A673 (cell line): ENCODE measurements at regions of chr16 and their contacts with region 1.

Region 1: GRCh38 chr16:21645261-21645721 is 7.1 kb downstream of the IGSF6 start:
- DNase-seq: no peak
- H3K4me3 ChIP-seq: no peak overlapping the region
- H3K27ac ChIP-seq: peak overlapping the region; percentile 35
- H3K4me1 ChIP-seq: peaks cover 9% of the 10 kb centered on the region
- H3K27me3 ChIP-seq: no peaks in the 10 kb centered on the region
- CTCF ChIP-seq: no peak

Region 2: GRCh38 chr16:21584817-21585216 is 60.5 kb before region 1 on chr16:
- CTCF ChIA-PET with region 1: interaction called, 4 read pairs
- POLR2A ChIA-PET with region 1: no interaction called
- intact Hi-C with region 1: loop called (anchors 1 kb)
- DNase-seq: no peak
- H3K4me3 ChIP-seq: no peak overlapping the region
- H3K27ac ChIP-seq: no peak overlapping the region
- H3K4me1 ChIP-seq: no peaks in the 10 kb centered on the region
- H3K27me3 ChIP-seq: no peaks in the 10 kb centered on the region
- CTCF ChIP-seq: no peak

Region 3: DNA sequence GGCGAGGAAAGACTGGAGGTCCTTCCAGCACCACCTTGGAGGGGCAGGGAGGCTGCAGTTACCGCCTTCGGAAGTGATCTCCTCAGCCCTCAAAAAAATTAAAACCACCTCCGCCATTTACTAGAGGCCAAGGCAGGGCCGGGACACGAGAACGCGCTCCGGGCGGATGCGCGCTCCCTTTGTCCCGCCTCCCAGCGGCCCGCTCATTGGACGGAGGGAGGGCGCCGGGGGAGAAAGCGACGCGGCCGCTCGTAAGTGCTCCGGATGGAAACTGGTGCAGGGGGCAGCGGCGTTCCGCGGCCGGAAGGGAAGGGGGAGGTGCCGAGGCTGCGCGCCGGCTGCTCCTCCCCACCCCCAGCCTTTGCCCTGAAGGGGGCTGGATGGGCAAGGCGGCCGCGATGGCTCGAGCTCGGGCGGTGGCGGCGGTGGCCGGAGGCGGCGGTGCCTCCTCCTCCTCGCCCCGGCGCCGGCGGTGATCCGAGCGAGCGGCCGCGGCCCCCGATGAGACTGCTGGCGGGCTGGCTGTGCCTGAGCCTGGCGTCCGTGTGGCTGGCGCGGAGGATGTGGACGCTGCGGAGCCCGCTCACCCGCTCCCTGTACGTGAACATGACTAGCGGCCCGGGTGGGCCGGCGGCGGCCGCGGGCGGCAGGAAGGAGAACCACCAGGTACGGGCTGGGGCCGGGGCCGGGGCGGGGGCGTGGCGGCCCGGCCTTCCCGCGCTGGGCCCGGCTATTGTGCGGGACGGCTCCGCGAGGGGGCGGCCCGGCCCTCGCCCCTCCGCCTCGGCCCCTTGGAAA is 45.9 kb before region 1 on chr16 and contains the start of gene METTL9:
- CTCF ChIA-PET with region 1: no interaction called
- POLR2A ChIA-PET with region 1: no interaction called
- intact Hi-C with region 1: loop called (anchors 5 kb)
- DNase-seq: peak; percentile 97
- H3K4me3 ChIP-seq: peak within 1 kb of the TSS; percentile 94
- H3K27ac ChIP-seq: peak within 1 kb of the TSS; percentile 95
- H3K4me1 ChIP-seq: peaks cover 19% of the 10 kb centered on the region
- H3K27me3 ChIP-seq: no peaks in the 10 kb centered on the region
- CTCF ChIP-seq: no peak
- total RNA-seq, gene METTL9: 145 and 151 TPM in 2 replicates

Region 4: GRCh38 chr16:22161999-22162655 is 516.8 kb after region 1 on chr16 and contains the start of gene SDR42E2:
- CTCF ChIA-PET with region 1: no interaction called
- POLR2A ChIA-PET with region 1: no interaction called
- intact Hi-C with region 1: no loop called
- DNase-seq: no peak
- H3K4me3 ChIP-seq: no peak within 1 kb of the TSS
- H3K27ac ChIP-seq: no peak within 1 kb of the TSS
- H3K4me1 ChIP-seq: no peaks in the 10 kb centered on the region
- H3K27me3 ChIP-seq: peaks cover 11% of the 10 kb centered on the region
- CTCF ChIP-seq: no peak
- total RNA-seq, gene SDR42E2: not detected in 2 replicates